Mucosa of descending colon (tissue), 3 donors: ENCODE measurements at regions of chr2 and their contacts with region 1.

Region 1: GRCh38 chr2:191051825-191052778 is 38.1 kb upstream of the STAT1 start:
- DNase-seq: peak in 1 of 3 donors; percentile 52
- ATAC-seq: peak; percentile 69
- H3K4me3 ChIP-seq: no peak overlapping the region
- H3K4me1 ChIP-seq: peaks cover 5% of the 10 kb centered on the region
- CTCF ChIP-seq: no peak

Region 2: DNA sequence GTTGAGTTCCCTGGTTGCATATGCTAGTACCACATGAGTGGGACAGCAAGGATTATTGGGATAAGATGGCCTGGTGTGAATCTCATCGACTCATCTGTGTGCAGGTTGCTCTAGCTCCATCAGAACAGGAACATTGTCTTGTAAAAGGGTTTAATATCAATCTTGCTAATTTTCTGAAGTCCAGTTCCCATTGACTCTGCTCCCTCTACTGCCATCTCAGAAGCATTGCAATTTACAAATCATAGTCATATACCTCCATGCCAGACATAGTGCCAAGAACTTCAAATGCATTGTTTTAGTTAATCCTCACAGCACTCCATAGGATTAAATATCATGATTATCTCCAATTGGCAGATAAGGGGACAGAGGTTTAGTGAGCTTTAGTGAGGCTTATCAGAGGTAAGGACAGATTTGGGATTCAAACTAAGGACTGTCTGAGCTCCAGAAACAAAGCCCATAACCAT is 103.5 kb after region 1 on chr2:
- intact Hi-C with region 1: loop called in 1 of 2 experiments (anchors 2 kb)
- DNase-seq: no peak
- ATAC-seq: peak; percentile 42
- H3K4me3 ChIP-seq: no peak overlapping the region
- H3K4me1 ChIP-seq: peaks cover 3% of the 10 kb centered on the region
- CTCF ChIP-seq: peak; percentile 19

Region 3: GRCh38 chr2:191218292-191218898 is 166.3 kb after region 1 on chr2:
- intact Hi-C with region 1: no loop called
- DNase-seq: peak in 1 of 3 donors; percentile 77
- ATAC-seq: peak; percentile 66
- H3K4me3 ChIP-seq: no peak overlapping the region
- H3K4me1 ChIP-seq: peaks cover 17% of the 10 kb centered on the region
- CTCF ChIP-seq: peak; percentile 43